ENCODE measurements at regions of chr4 and their contacts with region 1.

Region 1: GRCh38 chr4:122798101-122798500 is 28.5 kb upstream of the FGF2 start:
- DNase-seq: peak; percentile 95
- H3K4me3 ChIP-seq: peak overlapping the region; percentile 26
- CTCF ChIP-seq: no peak

Region 2: DNA sequence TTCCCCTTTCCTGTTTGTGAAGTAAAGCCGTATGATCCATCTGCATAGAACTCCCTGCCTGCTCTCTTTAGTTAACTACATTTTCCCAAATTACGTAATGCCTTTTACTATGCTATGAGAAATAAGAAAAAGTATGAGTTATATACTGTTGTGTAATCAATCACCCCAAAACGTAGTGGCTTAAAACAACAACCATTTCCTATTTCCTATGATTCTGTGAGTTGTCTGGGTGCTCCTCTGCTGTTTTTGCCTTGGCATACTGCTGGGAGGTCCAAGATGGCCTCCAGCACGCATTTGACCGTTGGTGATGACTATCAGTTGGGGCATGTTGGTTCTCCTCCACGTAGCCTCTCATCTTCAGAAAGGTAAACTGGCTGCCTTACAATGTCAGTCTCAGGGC is 25.8 kb before region 1 on chr4:
- CTCF ChIA-PET with region 1: no interaction called
- POLR2A ChIA-PET with region 1: no interaction called
- DNase-seq: no peak
- H3K4me3 ChIP-seq: no peak overlapping the region
- CTCF ChIP-seq: no peak

Region 3: GRCh38 chr4:122783301-122784215 is 14.5 kb before region 1 on chr4:
- CTCF ChIA-PET with region 1: interaction called, 4 read pairs
- POLR2A ChIA-PET with region 1: interaction called, 17 read pairs
- DNase-seq: peak; percentile 80
- H3K4me3 ChIP-seq: no peak overlapping the region
- CTCF ChIP-seq: no peak

Measured in AG04449 (cell line).